Tibial artery (tissue), 4 donors: ENCODE measurements at regions of chr6 and their contacts with region 1.

Region 1: GRCh38 chr6:158793432-158793831 is 25.7 kb downstream of the EZR start:
- DNase-seq: no peak
- H3K4me3 ChIP-seq: no peak overlapping the region
- H3K27ac ChIP-seq: no peak overlapping the region
- H3K4me1 ChIP-seq: peaks cover 0 to 15% (median 13%) of the 10 kb centered on the region in 4 donors
- H3K27me3 ChIP-seq: no peaks in the 10 kb centered on the region
- CTCF ChIP-seq: peak; percentile 17 to 29

Region 2: GRCh38 chr6:158718461-158719046 is 74.9 kb before region 1 on chr6:
- intact Hi-C with region 1: loop called (anchors 10 kb)
- DNase-seq: peak in 1 of 2 donors; percentile 51
- H3K4me3 ChIP-seq: no peak overlapping the region
- H3K27ac ChIP-seq: no peak overlapping the region
- H3K4me1 ChIP-seq: no peaks in the 10 kb centered on the region
- H3K27me3 ChIP-seq: no peaks in the 10 kb centered on the region
- CTCF ChIP-seq: peak; percentile 29 to 31

Region 3: GRCh38 chr6:158999666-159000403 is 206.4 kb after region 1 on chr6 and contains the start of gene RSPH3:
- intact Hi-C with region 1: loop called (anchors 10 kb)
- DNase-seq: peak; percentile 86 to 95
- H3K4me3 ChIP-seq: peak within 1 kb of the TSS; percentile 71 to 79
- H3K27ac ChIP-seq: peak within 1 kb of the TSS; percentile 75 to 76
- H3K4me1 ChIP-seq: peaks cover 0 to 13% (median 3%) of the 10 kb centered on the region in 4 donors
- H3K27me3 ChIP-seq: no peaks in the 10 kb centered on the region
- CTCF ChIP-seq: peak in 1 of 2 experiments; percentile 14